ENCODE measurements at regions of chr11 and their contacts with region 1.

Region 1: DNA sequence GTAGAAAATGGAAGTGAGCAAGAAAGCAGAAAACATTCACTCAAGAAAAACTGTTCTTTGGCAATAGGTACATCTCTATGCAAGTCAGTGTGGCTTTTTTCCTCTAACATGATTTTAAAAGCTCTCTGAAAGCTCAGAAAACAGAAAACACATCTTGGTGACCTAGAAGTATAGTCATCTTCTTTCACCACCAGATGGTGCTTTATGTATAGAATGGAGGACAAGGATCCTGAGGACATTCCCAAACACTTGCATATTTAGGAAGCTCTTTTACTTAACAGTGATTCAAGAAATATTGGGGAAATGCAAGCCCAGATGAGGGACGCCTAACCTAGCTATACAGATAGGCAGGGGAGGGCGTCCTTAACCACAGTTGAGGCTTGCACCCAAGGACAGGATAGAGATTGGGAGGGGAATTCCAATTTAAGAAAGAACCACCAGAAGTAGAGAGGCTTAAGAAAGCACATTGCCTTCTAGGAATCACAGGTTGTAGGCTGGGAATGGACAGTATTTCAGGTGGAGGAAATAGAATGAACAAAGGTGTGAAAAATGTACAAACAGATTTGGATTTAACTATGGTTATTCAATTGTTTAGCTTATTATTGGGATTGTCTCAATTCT is 13.8 kb upstream of the CCDC81 start:
- DNase-seq: peak; percentile 44
- H3K4me3 Mint-ChIP-seq: no peak overlapping the region
- H3K27ac Mint-ChIP-seq: no peak overlapping the region
- H3K4me1 Mint-ChIP-seq: no peaks in the 10 kb centered on the region
- H3K27me3 Mint-ChIP-seq: no peaks in the 10 kb centered on the region
- CTCF ChIP-seq: peak; percentile 28

Region 2: GRCh38 chr11:85902353-85902752 is 458.5 kb before region 1 on chr11:
- CTCF ChIA-PET with region 1: no interaction called
- POLR2A ChIA-PET with region 1: no interaction called
- intact Hi-C with region 1: no loop called
- DNase-seq: no peak
- H3K4me3 Mint-ChIP-seq: no peak overlapping the region
- H3K27ac Mint-ChIP-seq: no peak overlapping the region
- H3K4me1 Mint-ChIP-seq: no peaks in the 10 kb centered on the region
- H3K27me3 Mint-ChIP-seq: no peaks in the 10 kb centered on the region
- CTCF ChIP-seq: no peak

Region 3: GRCh38 chr11:86370922-86371594 is 10.2 kb after region 1 on chr11:
- CTCF ChIA-PET with region 1: interaction called, 44 read pairs
- POLR2A ChIA-PET with region 1: interaction called, 5 read pairs
- intact Hi-C with region 1: no loop called
- DNase-seq: no peak
- H3K4me3 Mint-ChIP-seq: no peak overlapping the region
- H3K27ac Mint-ChIP-seq: no peak overlapping the region
- H3K4me1 Mint-ChIP-seq: peaks cover 14% of the 10 kb centered on the region
- H3K27me3 Mint-ChIP-seq: no peaks in the 10 kb centered on the region
- CTCF ChIP-seq: no peak

Region 4: DNA sequence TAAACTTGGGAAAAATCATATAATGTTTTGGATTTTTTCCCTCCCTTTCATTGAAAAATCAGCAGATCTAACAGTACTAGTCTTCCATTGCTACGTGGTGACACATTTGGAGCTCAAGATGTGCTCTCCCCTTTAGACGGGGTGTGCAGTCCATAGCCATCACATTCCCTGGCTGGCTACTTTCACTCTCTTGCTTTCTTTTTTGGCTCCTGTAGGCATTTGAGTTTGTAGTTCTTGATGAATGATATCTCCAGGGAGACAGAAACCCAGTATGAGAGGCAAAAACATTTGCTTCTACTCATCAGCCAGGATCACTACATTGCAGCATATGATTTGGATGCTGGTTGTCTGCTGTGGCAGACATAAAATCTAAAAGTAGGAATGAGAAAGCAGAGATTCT is 25.9 kb after region 1 on chr11:
- CTCF ChIA-PET with region 1: interaction called, 12 read pairs
- POLR2A ChIA-PET with region 1: no interaction called
- intact Hi-C with region 1: no loop called
- DNase-seq: no peak
- H3K4me3 Mint-ChIP-seq: no peak overlapping the region
- H3K27ac Mint-ChIP-seq: no peak overlapping the region
- H3K4me1 Mint-ChIP-seq: no peaks in the 10 kb centered on the region
- H3K27me3 Mint-ChIP-seq: no peaks in the 10 kb centered on the region
- CTCF ChIP-seq: no peak

Region 5: DNA sequence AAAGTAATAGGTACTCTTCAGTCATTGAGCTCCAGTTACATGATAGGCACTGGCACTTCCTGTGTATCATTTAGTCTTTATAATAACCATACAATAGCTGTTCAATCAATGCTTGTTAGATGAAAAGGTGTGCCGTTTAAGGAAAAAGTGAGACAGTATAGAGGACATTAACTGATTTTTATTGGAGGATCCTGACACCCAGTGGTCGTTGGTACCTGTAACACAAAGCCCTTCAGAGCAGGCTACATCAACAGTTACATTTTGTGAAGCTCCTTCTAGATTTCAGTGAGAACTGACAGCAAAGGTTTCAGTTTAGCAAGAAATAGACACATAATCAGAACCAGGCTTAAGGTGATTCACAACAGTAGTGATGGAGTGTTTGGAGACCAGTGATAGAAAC is 58.0 kb after region 1 on chr11:
- CTCF ChIA-PET with region 1: interaction called, 81 read pairs
- POLR2A ChIA-PET with region 1: interaction called, 4 read pairs
- intact Hi-C with region 1: no loop called
- DNase-seq: peak; percentile 30
- H3K4me3 Mint-ChIP-seq: no peak overlapping the region
- H3K27ac Mint-ChIP-seq: no peak overlapping the region
- H3K4me1 Mint-ChIP-seq: no peaks in the 10 kb centered on the region
- H3K27me3 Mint-ChIP-seq: no peaks in the 10 kb centered on the region
- CTCF ChIP-seq: peak; percentile 10

Region 6: DNA sequence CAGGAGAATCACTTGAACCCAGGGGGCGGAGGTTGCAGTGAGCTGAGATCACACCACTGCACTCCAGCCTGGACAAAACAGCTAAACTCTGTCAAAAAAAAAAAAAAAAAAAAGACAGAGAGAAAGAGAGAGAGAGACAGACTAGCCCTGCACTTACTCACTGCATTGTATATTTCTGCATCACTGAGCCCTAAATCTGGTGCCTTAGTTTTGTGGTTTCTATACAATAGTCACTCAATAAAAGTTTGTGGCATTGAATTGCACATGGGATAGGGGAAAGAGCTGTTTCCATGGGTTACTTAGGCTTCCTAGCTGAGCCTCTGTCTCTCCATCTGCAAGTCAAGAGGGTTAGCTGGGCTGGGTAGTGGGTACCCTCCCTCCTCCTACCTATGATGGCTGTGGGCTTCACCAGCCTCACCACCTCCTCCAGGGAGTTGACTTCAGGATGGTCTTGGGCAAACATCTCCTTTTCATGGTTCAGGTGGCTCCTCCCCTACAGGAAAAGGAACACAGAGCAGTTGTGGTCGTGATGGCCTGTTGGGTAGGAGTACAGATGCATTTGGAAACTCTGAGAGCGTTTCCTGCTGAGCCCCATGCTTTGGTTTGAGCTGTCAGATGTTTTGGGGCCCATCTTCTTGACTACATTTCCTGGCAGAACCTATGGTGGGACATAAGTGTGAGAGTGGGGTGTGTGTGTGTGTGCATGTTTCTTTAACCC is 87.0 kb after region 1 on chr11:
- CTCF ChIA-PET with region 1: interaction called, 57 read pairs
- POLR2A ChIA-PET with region 1: no interaction called
- intact Hi-C with region 1: no loop called
- DNase-seq: no peak
- H3K4me3 Mint-ChIP-seq: no peak overlapping the region
- H3K27ac Mint-ChIP-seq: no peak overlapping the region
- H3K4me1 Mint-ChIP-seq: no peaks in the 10 kb centered on the region
- H3K27me3 Mint-ChIP-seq: no peaks in the 10 kb centered on the region
- CTCF ChIP-seq: no peak

Measured in MCF 10A (cell line).